ENCODE measurements at regions of chr15 and their contacts with region 1.

Region 1: DNA sequence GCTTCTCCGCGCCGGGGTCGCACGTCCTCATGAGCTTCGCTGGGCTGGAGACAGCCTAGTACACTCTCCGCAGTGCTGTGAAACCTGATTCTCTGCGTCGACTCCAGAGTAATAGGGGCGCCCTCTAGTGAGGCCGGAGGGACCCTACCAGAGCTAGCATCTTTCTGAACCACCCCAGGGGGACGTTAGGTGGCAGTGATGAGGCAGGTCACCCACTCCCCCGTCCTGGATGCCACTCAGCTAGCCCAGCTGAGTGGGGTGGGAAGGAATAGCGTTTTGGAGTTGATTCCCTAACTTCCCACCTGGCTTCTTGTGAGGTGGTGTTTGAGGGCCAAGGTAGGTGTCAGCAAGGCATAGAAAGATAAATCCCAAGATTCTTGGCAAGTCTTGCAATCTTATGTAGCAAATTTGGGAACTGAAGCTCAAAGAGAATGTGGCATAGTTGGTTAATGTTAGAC is 4.0 kb downstream of the DUOXA2 start:
- DNase-seq: peak; percentile 26
- H3K4me3 ChIP-seq: no peak overlapping the region
- H3K27me3 ChIP-seq: peaks cover 38% of the 10 kb centered on the region
- CTCF ChIP-seq: peak; percentile 100

Region 2: DNA sequence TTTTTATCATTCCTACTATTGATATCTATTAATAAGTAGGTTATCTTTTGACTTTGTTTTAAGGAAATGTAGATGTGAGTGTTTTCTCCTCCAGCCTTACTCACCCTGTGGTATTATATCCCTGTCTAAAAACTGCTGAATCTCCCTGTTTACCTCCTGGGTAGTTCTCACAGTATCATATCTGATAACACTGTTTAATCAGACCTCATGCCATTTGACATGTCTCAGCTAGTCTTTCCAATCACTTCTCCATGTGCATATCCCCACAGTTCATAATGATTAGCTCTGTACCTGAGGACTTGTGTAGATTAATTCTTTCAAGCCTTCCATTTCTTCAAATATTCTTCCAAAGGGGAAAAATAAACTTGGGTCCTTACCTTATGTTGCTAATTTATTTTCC is 34.9 kb before region 1 on chr15:
- CTCF ChIA-PET with region 1: interaction called, 11 read pairs
- POLR2A ChIA-PET with region 1: no interaction called
- DNase-seq: no peak
- H3K4me3 ChIP-seq: no peak overlapping the region
- H3K27me3 ChIP-seq: no peaks in the 10 kb centered on the region
- CTCF ChIP-seq: no peak

Region 3: GRCh38 chr15:45094358-45094730 is 23.8 kb before region 1 on chr15:
- CTCF ChIA-PET with region 1: interaction called, 33 read pairs
- POLR2A ChIA-PET with region 1: no interaction called
- DNase-seq: no peak
- H3K4me3 ChIP-seq: no peak overlapping the region
- H3K27me3 ChIP-seq: peaks cover 7% of the 10 kb centered on the region
- CTCF ChIP-seq: no peak

Region 4: DNA sequence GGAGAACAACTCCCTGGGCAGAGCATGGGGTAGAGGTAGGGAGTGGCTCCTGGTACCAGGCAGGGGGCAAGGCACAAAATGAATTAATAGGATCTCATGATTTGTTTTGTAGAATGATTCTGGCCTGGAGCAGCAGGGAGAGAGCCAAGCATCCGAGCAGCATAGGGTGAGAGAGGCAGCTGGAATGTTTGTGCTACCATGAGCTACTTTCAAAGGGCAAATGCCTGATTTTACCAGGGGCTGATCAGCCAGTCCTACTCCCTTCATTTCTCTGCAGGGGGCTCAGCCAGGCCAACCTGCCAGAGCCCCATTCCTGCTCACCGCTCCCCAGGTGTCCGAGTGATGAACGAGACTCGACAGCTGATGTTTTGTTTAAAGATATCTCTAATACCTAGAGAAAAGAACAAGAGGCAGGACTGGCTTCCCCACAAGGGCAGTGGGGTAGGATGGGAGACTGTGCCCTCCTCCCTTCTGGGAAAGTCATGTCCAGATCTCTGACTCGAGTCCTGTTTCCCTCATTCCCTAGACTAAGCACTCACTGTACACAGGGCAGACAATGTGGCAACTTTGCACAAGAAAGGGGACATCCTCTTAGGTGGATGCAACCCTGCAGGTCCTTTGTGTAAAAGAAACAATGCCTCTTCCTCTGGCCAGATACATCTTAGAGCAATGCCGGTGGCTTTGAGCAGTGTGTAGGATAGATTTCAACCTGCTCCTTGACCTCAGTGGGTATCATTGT is 17.1 kb before region 1 on chr15:
- CTCF ChIA-PET with region 1: interaction called, 33 read pairs
- POLR2A ChIA-PET with region 1: no interaction called
- DNase-seq: no peak
- H3K4me3 ChIP-seq: no peak overlapping the region
- H3K27me3 ChIP-seq: peaks cover 6% of the 10 kb centered on the region
- CTCF ChIP-seq: no peak

Region 5: GRCh38 chr15:45106002-45106790 is 12.0 kb before region 1 on chr15:
- CTCF ChIA-PET with region 1: interaction called, 15 read pairs
- POLR2A ChIA-PET with region 1: no interaction called
- DNase-seq: no peak
- H3K4me3 ChIP-seq: no peak overlapping the region
- H3K27me3 ChIP-seq: peaks cover 14% of the 10 kb centered on the region
- CTCF ChIP-seq: no peak

Region 6: DNA sequence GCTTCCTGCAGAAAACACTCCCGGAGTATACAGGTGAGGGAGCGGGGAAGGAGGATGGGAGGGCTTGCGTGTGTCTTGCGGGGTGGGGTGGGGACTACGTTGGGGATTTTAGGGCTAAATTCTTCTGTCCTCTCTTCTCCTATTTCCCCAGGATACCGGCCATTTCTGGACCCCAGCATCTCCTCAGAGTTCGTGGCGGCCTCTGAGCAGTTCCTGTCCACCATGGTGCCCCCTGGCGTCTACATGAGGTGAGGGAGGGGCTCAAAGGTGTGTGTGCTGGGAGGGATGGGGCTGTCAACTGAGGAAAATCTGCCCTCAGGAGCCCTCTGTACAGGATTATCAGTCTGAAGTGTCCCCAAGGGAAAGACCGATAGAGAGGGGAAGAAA is 18.2 kb after region 1 on chr15:
- CTCF ChIA-PET with region 1: interaction called, 24 read pairs
- POLR2A ChIA-PET with region 1: no interaction called
- DNase-seq: no peak
- H3K4me3 ChIP-seq: no peak overlapping the region
- H3K27me3 ChIP-seq: peaks cover 21% of the 10 kb centered on the region
- CTCF ChIP-seq: no peak

Measured in BJ (cell line).